ENCODE measurements at regions of chr6 and their contacts with region 1.

Region 1: DNA sequence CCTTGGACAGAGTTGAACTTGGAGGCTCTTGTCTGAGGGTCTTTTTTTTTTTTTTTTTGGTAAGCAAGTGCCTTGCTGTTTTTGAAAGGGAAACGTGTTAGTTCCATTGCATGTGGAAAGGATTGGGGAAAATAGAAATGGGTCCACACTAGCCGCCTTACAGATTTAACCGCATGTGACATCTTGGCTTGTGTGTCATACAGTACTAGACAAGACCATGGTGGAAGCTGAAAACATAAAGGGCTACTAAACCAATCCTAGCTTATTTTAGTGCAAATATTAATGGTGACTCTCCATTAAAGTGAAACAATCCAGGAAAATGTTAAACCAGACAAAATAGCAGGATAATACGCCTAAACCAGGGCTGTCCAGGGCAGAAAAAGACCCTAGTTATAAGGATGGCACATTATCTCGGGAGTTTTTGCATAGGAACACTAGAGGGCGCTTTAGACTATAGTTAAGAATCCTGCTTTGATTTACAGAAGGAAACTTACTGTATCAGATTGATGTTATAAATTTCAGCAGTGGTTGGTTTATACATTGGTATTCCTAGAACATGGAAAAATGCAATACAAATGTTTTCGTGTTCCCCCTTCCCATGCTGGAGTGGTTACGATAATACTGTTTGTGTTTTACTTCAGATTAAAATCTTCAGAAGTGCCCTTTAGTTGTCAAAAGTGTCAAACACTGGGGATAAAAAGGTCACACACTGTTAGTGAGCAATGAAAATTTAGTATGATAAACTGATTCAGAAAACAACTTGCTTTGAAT is 59.8 kb upstream of the DEK start:
- DNase-seq: peak in 3 of 9 experiments; percentile 13 to 56 (median 43)
- ATAC-seq: no peak
- H3K4me3 ChIP-seq: no peak overlapping the region
- H3K4me3 Mint-ChIP-seq: no peak overlapping the region
- H3K27ac ChIP-seq: no peak overlapping the region
- H3K27ac Mint-ChIP-seq: no peak overlapping the region
- H3K4me1 ChIP-seq: no peaks in the 10 kb centered on the region
- H3K4me1 Mint-ChIP-seq: no peaks in the 10 kb centered on the region
- H3K27me3 ChIP-seq: no peaks in the 10 kb centered on the region
- H3K27me3 Mint-ChIP-seq: peaks cover 2% of the 10 kb centered on the region
- CTCF ChIP-seq: peak; percentile 91

Region 2: DNA sequence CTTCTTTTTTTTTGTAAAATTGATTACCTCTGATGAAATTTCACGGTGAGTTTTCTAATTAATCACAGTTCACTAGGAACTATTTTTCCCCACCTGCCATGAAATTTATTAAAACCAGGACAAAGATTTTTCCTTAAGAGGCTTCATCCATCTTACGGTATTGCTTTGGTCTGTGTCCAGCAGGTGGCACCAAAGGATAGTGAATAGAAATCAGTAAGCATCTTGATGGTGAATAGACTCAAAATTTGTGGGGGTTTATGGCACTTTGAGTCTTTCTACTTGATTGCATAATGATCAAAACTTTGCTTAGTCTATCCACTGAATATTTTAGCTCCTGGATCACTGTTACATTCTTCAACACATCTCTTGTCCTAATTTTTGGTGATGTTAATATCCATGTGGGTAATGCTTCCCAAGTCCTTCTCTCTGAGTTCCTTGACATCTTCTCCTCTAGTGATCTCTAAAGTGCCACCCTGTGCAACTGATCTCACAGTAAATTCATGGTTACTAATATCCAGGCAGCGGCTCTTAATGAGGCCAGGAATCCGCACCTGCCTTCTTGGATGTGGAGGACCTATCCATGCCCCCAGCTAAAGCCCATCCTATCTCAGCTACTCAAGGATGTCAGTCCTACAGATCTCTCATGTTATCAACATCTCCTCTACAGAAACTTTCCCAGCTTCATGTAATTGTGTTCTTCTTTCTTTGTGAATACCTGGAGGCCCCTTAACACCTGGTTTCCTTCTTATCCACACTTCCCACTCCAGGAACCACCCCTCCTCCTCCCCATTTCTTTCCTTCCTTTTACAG is 1167.8 kb before region 1 on chr6:
- CTCF ChIA-PET with region 1: no interaction called
- POLR2A ChIA-PET with region 1: no interaction called
- intact Hi-C with region 1: loop called in 1 of 2 experiments (anchors 10 kb)
- DNase-seq: peak; percentile 10 to 78 (median 67)
- ATAC-seq: peak; percentile 52
- H3K4me3 ChIP-seq: no peak overlapping the region
- H3K4me3 Mint-ChIP-seq: no peak overlapping the region
- H3K27ac ChIP-seq: no peak overlapping the region
- H3K27ac Mint-ChIP-seq: no peak overlapping the region
- H3K4me1 ChIP-seq: no peaks in the 10 kb centered on the region
- H3K4me1 Mint-ChIP-seq: no peaks in the 10 kb centered on the region
- H3K27me3 ChIP-seq: no peaks in the 10 kb centered on the region
- H3K27me3 Mint-ChIP-seq: peaks cover 12% of the 10 kb centered on the region
- CTCF ChIP-seq: peak; percentile 90

Region 3: GRCh38 chr6:17381424-17382147 is 942.5 kb before region 1 on chr6:
- CTCF ChIA-PET with region 1: no interaction called
- POLR2A ChIA-PET with region 1: no interaction called
- intact Hi-C with region 1: no loop called
- DNase-seq: no peak
- ATAC-seq: no peak
- H3K4me3 ChIP-seq: no peak overlapping the region
- H3K4me3 Mint-ChIP-seq: no peak overlapping the region
- H3K27ac ChIP-seq: no peak overlapping the region
- H3K27ac Mint-ChIP-seq: no peak overlapping the region
- H3K4me1 ChIP-seq: no peaks in the 10 kb centered on the region
- H3K4me1 Mint-ChIP-seq: no peaks in the 10 kb centered on the region
- H3K27me3 ChIP-seq: no peaks in the 10 kb centered on the region
- H3K27me3 Mint-ChIP-seq: peaks cover 11% of the 10 kb centered on the region
- CTCF ChIP-seq: no peak

Region 4: DNA sequence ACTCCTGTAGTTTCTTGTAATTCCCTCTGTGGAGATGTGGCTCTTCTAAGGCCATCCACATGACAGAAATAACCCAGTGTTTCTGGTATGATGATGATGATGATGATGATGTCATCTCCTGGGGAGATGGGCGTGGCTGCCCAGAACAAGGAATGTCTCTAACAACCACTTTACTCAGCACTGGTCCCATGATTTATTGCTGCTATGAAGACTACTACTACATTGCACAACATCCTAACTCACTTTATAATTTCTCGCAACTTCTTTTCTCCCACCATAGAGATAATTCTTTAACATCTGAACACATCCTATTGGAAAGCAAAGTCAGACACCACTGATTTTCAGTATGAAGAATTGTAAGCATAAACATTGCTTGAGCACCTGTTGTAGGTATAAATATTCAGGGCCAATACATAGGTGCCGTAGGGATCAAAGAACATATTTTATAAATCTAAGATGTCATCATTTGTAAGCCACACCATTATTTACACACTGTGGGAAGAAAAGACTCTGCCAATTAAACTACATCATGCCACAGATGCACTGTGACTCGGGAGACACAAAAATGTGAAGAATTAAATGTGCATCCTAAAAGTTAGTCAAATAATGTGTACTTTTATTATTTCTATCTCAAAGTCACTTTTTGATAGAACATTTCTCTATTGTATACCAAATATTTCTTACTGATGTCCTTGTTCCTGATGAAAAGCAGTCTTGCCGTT is 175.7 kb before region 1 on chr6:
- CTCF ChIA-PET with region 1: no interaction called
- POLR2A ChIA-PET with region 1: no interaction called
- intact Hi-C with region 1: no loop called
- DNase-seq: no peak
- ATAC-seq: no peak
- H3K4me3 ChIP-seq: no peak overlapping the region
- H3K4me3 Mint-ChIP-seq: no peak overlapping the region
- H3K27ac ChIP-seq: no peak overlapping the region
- H3K27ac Mint-ChIP-seq: no peak overlapping the region
- H3K4me1 ChIP-seq: no peaks in the 10 kb centered on the region
- H3K4me1 Mint-ChIP-seq: peaks cover 14% of the 10 kb centered on the region
- H3K27me3 ChIP-seq: no peaks in the 10 kb centered on the region
- H3K27me3 Mint-ChIP-seq: no peaks in the 10 kb centered on the region
- CTCF ChIP-seq: no peak

Region 5: DNA sequence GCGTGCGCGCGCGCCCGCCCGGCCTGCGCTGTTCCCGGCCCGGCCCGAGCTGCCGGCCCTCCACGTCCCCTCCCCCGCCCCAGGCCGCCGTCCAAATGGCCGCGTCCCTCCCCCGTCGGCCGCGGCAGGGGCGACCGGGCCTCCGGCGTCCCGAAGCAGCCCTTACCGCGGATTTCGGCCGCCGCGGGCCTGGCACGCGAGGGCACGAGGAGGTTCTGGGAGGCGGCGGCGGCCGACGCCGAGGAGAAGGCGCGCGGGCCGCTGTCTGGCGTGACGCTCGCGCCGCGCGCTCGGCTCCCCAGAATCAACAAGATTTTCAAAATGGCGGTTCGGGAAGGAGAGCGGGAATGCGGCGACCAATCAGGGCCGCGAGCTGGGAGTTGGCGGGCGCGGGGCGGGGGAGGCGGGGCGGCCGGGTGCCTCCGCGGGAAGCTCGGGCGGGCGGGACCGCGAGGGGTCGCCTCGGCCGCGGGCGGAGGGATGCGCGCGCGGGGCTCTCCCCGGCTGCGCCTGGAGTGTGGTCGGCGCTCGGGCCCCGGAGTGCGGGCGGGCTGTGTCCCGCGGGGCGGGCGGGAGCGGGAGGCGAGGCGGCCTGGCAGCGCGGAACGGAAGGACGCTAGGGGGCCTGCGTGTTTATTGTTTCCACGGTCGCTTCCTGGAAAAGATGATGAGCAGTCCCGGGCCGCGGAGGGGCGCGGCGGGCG is 59.7 kb before region 1 on chr6 and contains the start of gene DEK:
- CTCF ChIA-PET with region 1: no interaction called
- POLR2A ChIA-PET with region 1: no interaction called
- intact Hi-C with region 1: loop called in 1 of 2 experiments (anchors 1 kb)
- DNase-seq: peak; percentile 59 to 90 (median 84)
- ATAC-seq: peak; percentile 66
- H3K4me3 ChIP-seq: peak within 1 kb of the TSS; percentile 67 to 79
- H3K4me3 Mint-ChIP-seq: peak within 1 kb of the TSS; percentile 90
- H3K27ac ChIP-seq: peak within 1 kb of the TSS; percentile 53 to 89
- H3K27ac Mint-ChIP-seq: peak within 1 kb of the TSS; percentile 95
- H3K4me1 ChIP-seq: peaks cover 33% of the 10 kb centered on the region
- H3K4me1 Mint-ChIP-seq: peaks cover 52% of the 10 kb centered on the region
- H3K27me3 ChIP-seq: no peaks in the 10 kb centered on the region
- H3K27me3 Mint-ChIP-seq: no peaks in the 10 kb centered on the region
- CTCF ChIP-seq: peak; percentile 45
- total RNA-seq, gene DEK: 39.5 to 47.5 TPM

Region 6: GRCh38 chr6:18352842-18353241 is 28.7 kb after region 1 on chr6:
- CTCF ChIA-PET with region 1: no interaction called
- POLR2A ChIA-PET with region 1: no interaction called
- intact Hi-C with region 1: no loop called
- DNase-seq: no peak
- ATAC-seq: no peak
- H3K4me3 ChIP-seq: no peak overlapping the region
- H3K4me3 Mint-ChIP-seq: no peak overlapping the region
- H3K27ac ChIP-seq: no peak overlapping the region
- H3K27ac Mint-ChIP-seq: no peak overlapping the region
- H3K4me1 ChIP-seq: no peaks in the 10 kb centered on the region
- H3K4me1 Mint-ChIP-seq: no peaks in the 10 kb centered on the region
- H3K27me3 ChIP-seq: no peaks in the 10 kb centered on the region
- H3K27me3 Mint-ChIP-seq: peaks cover 13% of the 10 kb centered on the region
- CTCF ChIP-seq: no peak

Region 7: DNA sequence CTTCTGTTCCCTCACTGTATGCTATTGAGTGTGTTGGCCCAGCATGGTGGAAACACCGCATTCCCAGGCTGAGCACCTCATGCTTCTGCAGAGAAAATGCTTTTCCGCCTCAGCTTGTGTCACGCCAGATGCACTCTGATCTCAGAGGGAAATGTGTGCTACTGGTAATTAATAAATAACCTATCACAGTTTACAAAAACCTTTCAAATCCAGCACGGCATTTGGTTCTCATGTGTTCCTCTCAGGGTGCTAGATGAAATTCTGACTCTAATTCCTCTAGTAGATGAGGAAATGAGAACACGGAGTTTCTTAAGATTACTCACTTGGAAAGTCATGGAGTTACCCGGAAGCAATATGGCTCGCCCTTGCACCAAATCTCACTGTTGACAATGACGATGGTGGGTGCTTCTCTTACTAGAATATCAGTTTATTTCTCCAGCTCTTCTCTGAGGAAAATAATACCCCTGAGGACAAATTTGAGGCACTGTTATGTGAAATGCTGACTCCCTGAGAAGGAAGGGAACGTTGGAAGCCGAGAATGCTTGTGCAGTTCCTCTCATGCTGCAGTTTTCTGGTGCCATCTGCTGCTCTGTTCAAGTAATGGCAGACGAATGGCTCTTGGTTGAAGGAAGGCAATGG is 179.6 kb after region 1 on chr6:
- CTCF ChIA-PET with region 1: interaction called, 193 read pairs
- POLR2A ChIA-PET with region 1: no interaction called
- intact Hi-C with region 1: loop called (anchors 1 kb)
- DNase-seq: peak in 6 of 9 experiments; percentile 7 to 62 (median 27)
- ATAC-seq: no peak
- H3K4me3 ChIP-seq: no peak overlapping the region
- H3K4me3 Mint-ChIP-seq: no peak overlapping the region
- H3K27ac ChIP-seq: no peak overlapping the region
- H3K27ac Mint-ChIP-seq: no peak overlapping the region
- H3K4me1 ChIP-seq: no peaks in the 10 kb centered on the region
- H3K4me1 Mint-ChIP-seq: peaks cover 2% of the 10 kb centered on the region
- H3K27me3 ChIP-seq: no peaks in the 10 kb centered on the region
- H3K27me3 Mint-ChIP-seq: no peaks in the 10 kb centered on the region
- CTCF ChIP-seq: peak; percentile 82

Region 8: GRCh38 chr6:18595774-18596530 is 271.8 kb after region 1 on chr6:
- CTCF ChIA-PET with region 1: no interaction called
- POLR2A ChIA-PET with region 1: no interaction called
- intact Hi-C with region 1: loop called in 1 of 2 experiments (anchors 5 kb)
- DNase-seq: peak in 7 of 9 experiments; percentile 10 to 56 (median 45)
- ATAC-seq: no peak
- H3K4me3 ChIP-seq: no peak overlapping the region
- H3K4me3 Mint-ChIP-seq: no peak overlapping the region
- H3K27ac ChIP-seq: no peak overlapping the region
- H3K27ac Mint-ChIP-seq: no peak overlapping the region
- H3K4me1 ChIP-seq: no peaks in the 10 kb centered on the region
- H3K4me1 Mint-ChIP-seq: peaks cover 4% of the 10 kb centered on the region
- H3K27me3 ChIP-seq: no peaks in the 10 kb centered on the region
- H3K27me3 Mint-ChIP-seq: peaks cover 16% of the 10 kb centered on the region
- CTCF ChIP-seq: peak; percentile 98

Region 9: GRCh38 chr6:20056350-20056992 is 1732.4 kb after region 1 on chr6:
- CTCF ChIA-PET with region 1: no interaction called
- POLR2A ChIA-PET with region 1: no interaction called
- intact Hi-C with region 1: loop called (anchors 5 kb)
- DNase-seq: peak in 2 of 9 experiments; percentile 24 to 39
- ATAC-seq: no peak
- H3K4me3 ChIP-seq: no peak overlapping the region
- H3K4me3 Mint-ChIP-seq: no peak overlapping the region
- H3K27ac ChIP-seq: no peak overlapping the region
- H3K27ac Mint-ChIP-seq: no peak overlapping the region
- H3K4me1 ChIP-seq: no peaks in the 10 kb centered on the region
- H3K4me1 Mint-ChIP-seq: no peaks in the 10 kb centered on the region
- H3K27me3 ChIP-seq: no peaks in the 10 kb centered on the region
- H3K27me3 Mint-ChIP-seq: no peaks in the 10 kb centered on the region
- CTCF ChIP-seq: no peak

Region 10: DNA sequence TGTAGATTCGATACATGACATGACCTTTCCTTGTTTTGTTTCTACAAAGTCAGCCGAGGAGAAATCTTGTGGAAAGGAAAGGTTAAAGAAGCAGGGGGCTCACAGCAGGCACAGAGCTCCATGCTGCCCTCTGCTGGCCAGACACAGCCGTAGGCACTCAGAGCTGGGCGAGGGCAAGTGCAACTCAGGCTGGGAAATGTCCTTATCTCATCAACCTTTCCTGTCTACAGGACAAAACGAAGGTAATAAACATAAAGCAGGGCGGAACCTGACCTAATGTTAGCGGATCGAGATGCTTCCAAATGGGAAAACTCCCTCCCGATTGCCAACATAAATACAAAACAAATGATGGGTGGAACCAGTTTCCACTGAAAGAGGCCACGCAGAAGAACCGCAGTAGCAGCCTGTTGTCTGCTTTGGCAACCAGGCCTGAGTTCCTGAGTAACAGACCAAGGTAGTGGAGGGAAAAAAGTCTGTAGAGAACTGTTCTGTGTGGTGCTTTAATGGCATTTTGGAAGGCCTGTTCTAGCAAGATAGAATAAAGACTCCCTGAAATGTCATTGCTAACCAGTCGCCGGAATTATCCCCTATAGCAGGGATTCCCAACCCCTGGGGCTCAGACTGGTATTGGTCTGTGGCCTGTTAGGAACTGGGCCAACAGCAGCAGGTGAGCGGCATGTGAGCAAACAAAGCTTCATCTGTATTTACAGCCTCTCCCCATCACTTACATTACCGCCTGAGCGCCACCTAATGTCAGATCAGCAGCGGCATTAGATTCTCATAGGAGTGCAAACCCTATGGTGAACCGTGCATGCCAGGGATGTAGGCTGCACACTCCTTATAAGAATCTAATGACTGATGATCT is 1802.9 kb after region 1 on chr6:
- CTCF ChIA-PET with region 1: no interaction called
- POLR2A ChIA-PET with region 1: no interaction called
- intact Hi-C with region 1: loop called (anchors 2 kb)
- DNase-seq: peak; percentile 14 to 74 (median 62)
- ATAC-seq: peak; percentile 46
- H3K4me3 ChIP-seq: no peak overlapping the region
- H3K4me3 Mint-ChIP-seq: no peak overlapping the region
- H3K27ac ChIP-seq: no peak overlapping the region
- H3K27ac Mint-ChIP-seq: peak overlapping the region; percentile 33
- H3K4me1 ChIP-seq: no peaks in the 10 kb centered on the region
- H3K4me1 Mint-ChIP-seq: peaks cover 3% of the 10 kb centered on the region
- H3K27me3 ChIP-seq: no peaks in the 10 kb centered on the region
- H3K27me3 Mint-ChIP-seq: no peaks in the 10 kb centered on the region
- CTCF ChIP-seq: peak; percentile 87

Measured in CD8-positive, alpha-beta T cell (primary cell).